ENCODE measurements at regions of chr17 and their contacts with region 1.

Region 1: DNA sequence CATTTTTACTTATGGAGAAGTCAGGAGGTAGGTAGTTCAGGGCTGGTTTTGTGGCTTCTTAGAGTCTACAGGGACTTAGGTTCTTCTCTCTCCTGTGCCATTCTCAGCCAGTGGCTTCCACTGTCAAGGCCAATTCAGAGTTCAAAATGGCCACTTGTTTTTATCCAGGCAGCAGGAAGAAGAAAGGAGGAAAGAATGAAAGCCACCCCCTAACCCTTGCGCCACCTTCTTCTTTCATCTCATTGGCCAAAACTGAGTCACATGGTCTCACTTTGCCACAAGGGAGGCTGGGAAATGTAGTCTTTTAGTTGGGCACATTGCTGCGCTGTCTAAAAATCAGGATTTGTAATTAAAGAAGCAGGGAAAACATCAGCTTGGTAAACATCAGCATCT is 60.8 kb upstream of the MED9 start:
- DNase-seq: no peak
- H3K4me3 ChIP-seq: no peak overlapping the region
- H3K27ac ChIP-seq: peak overlapping the region; percentile 87
- H3K27me3 ChIP-seq: no peaks in the 10 kb centered on the region
- CTCF ChIP-seq: no peak

Region 2: GRCh38 chr17:17435323-17435722 is 19.3 kb after region 1 on chr17:
- CTCF ChIA-PET with region 1: interaction called, 14 read pairs
- POLR2A ChIA-PET with region 1: interaction called, 6 read pairs
- DNase-seq: peak; percentile 92
- H3K4me3 ChIP-seq: peak overlapping the region; percentile 27; the same call in 1 of the 2 replicates
- H3K27ac ChIP-seq: peak overlapping the region; percentile 93
- H3K27me3 ChIP-seq: no peaks in the 10 kb centered on the region
- CTCF ChIP-seq: peak; percentile 66

Region 3: DNA sequence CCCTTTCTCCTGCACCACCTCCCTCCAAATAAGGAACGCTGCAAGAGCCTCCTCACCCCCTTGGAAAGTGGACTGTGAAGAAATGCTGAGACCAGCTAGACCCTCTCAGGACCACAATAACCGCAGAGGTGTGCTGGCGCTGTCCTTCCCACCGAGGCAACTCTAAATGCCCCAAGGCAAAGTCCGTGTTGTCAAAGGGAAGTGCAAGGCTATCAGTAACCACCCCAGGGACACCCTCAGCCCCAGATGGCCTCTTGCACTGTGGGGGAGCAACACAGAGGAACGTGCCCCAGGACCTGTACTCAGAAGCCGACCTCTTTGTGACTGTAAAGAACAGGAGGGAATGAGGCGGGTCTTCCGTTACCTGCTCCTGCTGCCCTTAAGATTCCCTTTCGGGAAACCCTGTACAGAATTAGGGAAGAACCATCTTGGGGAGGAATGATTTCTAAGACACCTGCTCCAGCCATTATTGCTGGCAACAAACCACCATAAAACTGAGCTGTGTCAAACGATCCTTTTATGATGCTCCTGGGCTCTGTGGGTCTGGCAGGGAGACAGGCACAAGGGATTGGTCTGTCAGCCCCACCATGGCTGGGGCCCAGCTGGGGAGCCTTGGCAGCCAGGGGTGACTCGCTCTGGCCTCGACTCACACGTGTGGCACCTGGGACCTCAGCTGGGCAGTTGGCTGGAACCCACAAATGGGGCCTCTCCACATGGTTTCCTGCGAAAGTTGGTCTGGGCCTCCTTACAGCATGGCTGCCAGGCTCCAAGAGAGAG is 46.2 kb after region 1 on chr17:
- CTCF ChIA-PET with region 1: no interaction called
- POLR2A ChIA-PET with region 1: no interaction called
- DNase-seq: no peak
- H3K4me3 ChIP-seq: no peak overlapping the region
- H3K27ac ChIP-seq: no peak overlapping the region
- H3K27me3 ChIP-seq: peaks cover 20% of the 10 kb centered on the region
- CTCF ChIP-seq: no peak

Region 4: GRCh38 chr17:17476865-17477467 is 61.0 kb after region 1 on chr17 and contains the start of gene MED9:
- CTCF ChIA-PET with region 1: no interaction called
- POLR2A ChIA-PET with region 1: no interaction called
- DNase-seq: peak; percentile 55
- H3K4me3 ChIP-seq: peak within 1 kb of the TSS; percentile 72
- H3K27ac ChIP-seq: peak within 1 kb of the TSS; percentile 52
- H3K27me3 ChIP-seq: peaks cover 9% of the 10 kb centered on the region
- CTCF ChIP-seq: no peak
- polyA plus RNA-seq, gene MED9: 10.9 and 11.6 TPM in 2 replicates

Measured in AG04450 (cell line).